ENCODE measurements at regions of chr2 and their contacts with region 1.

Region 1: GRCh38 chr2:178761759-178762371 is 45.4 kb downstream of the TTN start:
- DNase-seq: peak; percentile 42
- ATAC-seq: peak; percentile 76
- H3K4me3 ChIP-seq: no peak overlapping the region
- H3K27ac ChIP-seq: no peak overlapping the region
- H3K4me1 ChIP-seq: no peaks in the 10 kb centered on the region
- H3K27me3 ChIP-seq: peaks cover 35% of the 10 kb centered on the region; the same call in 1 of the 2 replicates
- CTCF ChIP-seq: peak; percentile 63 to 81 (median 66); a peak in 5 of 6 replicates
- POLR2A ChIP-seq: no peak
- RAD21 ChIP-seq: peak; percentile 87

Region 2: GRCh38 chr2:178914259-178914849 is 152.5 kb after region 1 on chr2:
- CTCF ChIA-PET with region 1: interaction called, 6 read pairs
- POLR2A ChIA-PET with region 1: no interaction called
- RAD21 ChIA-PET with region 1: no interaction called
- intact Hi-C with region 1: loop called (anchors 2 kb)
- DNase-seq: peak; percentile 63
- ATAC-seq: peak; percentile 99
- H3K4me3 ChIP-seq: no peak overlapping the region
- H3K27ac ChIP-seq: no peak overlapping the region
- H3K4me1 ChIP-seq: no peaks in the 10 kb centered on the region
- H3K27me3 ChIP-seq: no peaks in the 10 kb centered on the region
- CTCF ChIP-seq: peak; percentile 73 to 88 (median 83)
- POLR2A ChIP-seq: no peak
- RAD21 ChIP-seq: peak; percentile 84

Region 3: DNA sequence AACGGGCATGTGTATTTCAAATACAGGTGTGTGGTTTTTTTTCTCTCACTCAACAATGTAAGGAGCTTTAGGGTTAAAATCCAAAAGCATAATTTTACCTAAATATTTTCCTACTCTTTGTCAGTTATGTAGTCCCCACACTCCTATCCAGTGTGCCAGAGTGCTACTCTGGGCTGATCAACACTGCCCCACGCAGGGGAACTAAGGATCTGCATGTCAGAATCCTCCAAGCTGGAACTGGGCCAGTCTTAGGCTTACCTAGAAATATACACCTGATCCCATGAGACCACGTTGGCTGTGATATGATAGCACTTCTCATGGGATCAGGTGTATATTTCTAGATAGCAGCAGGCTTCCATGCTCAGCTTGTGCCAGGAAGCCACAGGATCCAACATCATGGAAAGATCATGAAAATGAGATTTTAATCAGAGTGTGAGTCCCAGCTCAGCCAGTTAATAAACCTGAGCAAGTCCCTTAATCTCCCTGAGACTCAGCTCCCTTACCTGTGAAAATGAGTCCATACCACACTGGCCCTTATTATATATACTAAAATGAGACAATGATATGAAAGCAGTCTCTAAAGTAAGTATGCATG is 258.4 kb after region 1 on chr2:
- CTCF ChIA-PET with region 1: interaction called, 13 read pairs
- POLR2A ChIA-PET with region 1: no interaction called
- RAD21 ChIA-PET with region 1: no interaction called
- intact Hi-C with region 1: loop called (anchors 1 kb)
- DNase-seq: peak; percentile 51
- ATAC-seq: peak; percentile 99
- H3K4me3 ChIP-seq: no peak overlapping the region
- H3K27ac ChIP-seq: no peak overlapping the region
- H3K4me1 ChIP-seq: no peaks in the 10 kb centered on the region
- H3K27me3 ChIP-seq: no peaks in the 10 kb centered on the region; the same call in 1 of the 2 replicates
- CTCF ChIP-seq: peak; percentile 38 to 85 (median 80); a peak in 5 of 6 replicates
- POLR2A ChIP-seq: no peak
- RAD21 ChIP-seq: peak; percentile 69

Region 4: GRCh38 chr2:179059026-179059700 is 297.3 kb after region 1 on chr2:
- CTCF ChIA-PET with region 1: no interaction called
- POLR2A ChIA-PET with region 1: no interaction called
- RAD21 ChIA-PET with region 1: no interaction called
- intact Hi-C with region 1: no loop called
- DNase-seq: no peak
- ATAC-seq: no peak
- H3K4me3 ChIP-seq: no peak overlapping the region
- H3K27ac ChIP-seq: no peak overlapping the region
- H3K4me1 ChIP-seq: peaks cover 6 to 7% of the 10 kb centered on the region in 2 experiments
- H3K27me3 ChIP-seq: no peaks in the 10 kb centered on the region
- CTCF ChIP-seq: no peak
- POLR2A ChIP-seq: no peak
- RAD21 ChIP-seq: no peak

Region 5: GRCh38 chr2:179129574-179130238 is 367.8 kb after region 1 on chr2:
- CTCF ChIA-PET with region 1: interaction called, 8 read pairs
- POLR2A ChIA-PET with region 1: no interaction called
- RAD21 ChIA-PET with region 1: interaction called in 1 of 2 experiments, 3 read pairs
- intact Hi-C with region 1: loop called (anchors 10 kb)
- DNase-seq: no peak
- ATAC-seq: peak; percentile 72
- H3K4me3 ChIP-seq: no peak overlapping the region
- H3K27ac ChIP-seq: no peak overlapping the region
- H3K4me1 ChIP-seq: no peaks in the 10 kb centered on the region
- H3K27me3 ChIP-seq: no peaks in the 10 kb centered on the region
- CTCF ChIP-seq: peak; percentile 57 to 69 (median 65); a peak in 5 of 6 replicates
- POLR2A ChIP-seq: no peak
- RAD21 ChIP-seq: peak; percentile 73

Region 6: GRCh38 chr2:179936654-179937053 is 1174.8 kb after region 1 on chr2:
- CTCF ChIA-PET with region 1: no interaction called
- POLR2A ChIA-PET with region 1: no interaction called
- RAD21 ChIA-PET with region 1: no interaction called
- intact Hi-C with region 1: loop called (anchors 10 kb)
- DNase-seq: peak; percentile 29
- ATAC-seq: peak; percentile 90
- H3K4me3 ChIP-seq: no peak overlapping the region
- H3K27ac ChIP-seq: no peak overlapping the region
- H3K4me1 ChIP-seq: no peaks in the 10 kb centered on the region
- H3K27me3 ChIP-seq: no peaks in the 10 kb centered on the region
- CTCF ChIP-seq: peak; percentile 37 to 80 (median 70); a peak in 4 of 6 replicates
- POLR2A ChIP-seq: no peak
- RAD21 ChIP-seq: peak; percentile 60